ENCODE measurements at regions of chr10 and their contacts with region 1.

Region 1: DNA sequence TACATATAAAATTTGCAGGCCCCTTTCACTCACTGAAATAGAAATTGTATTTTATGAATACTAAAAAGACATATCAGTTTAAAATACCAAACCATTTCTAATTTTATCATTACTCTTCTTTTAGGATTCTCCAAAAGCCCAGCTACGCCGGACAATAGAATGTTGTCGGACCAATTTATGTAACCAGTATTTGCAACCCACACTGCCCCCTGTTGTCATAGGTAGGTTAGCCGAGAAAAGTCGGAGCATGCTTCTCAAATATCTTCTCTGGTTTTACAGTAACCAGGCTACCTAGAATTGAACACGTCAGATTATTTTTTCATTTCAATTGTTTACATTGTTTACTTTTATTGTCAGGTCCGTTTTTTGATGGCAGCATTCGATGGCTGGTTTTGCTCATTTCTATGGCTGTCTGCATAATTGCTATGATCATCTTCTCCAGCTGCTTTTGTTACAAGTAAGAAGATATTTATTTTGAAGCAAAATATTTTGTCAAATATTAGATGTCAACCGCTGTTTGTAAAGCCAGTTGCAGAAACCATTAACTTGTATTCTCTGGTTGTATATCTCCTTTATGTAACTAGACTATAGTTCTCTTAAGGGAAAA is 57.6 kb downstream of the MMRN2 start:
- DNase-seq: peak in 4 of 5 donors; percentile 29 to 35 (median 30)
- H3K4me3 ChIP-seq: no peak overlapping the region
- H3K4me3 Mint-ChIP-seq: no peak overlapping the region
- H3K27ac ChIP-seq: no peak overlapping the region
- H3K27ac Mint-ChIP-seq: no peak overlapping the region
- H3K4me1 ChIP-seq: no peaks in the 10 kb centered on the region
- H3K4me1 Mint-ChIP-seq: peaks cover 0 to 1% (median 0%) of the 10 kb centered on the region in 4 donors
- H3K27me3 ChIP-seq: no peaks in the 10 kb centered on the region
- H3K27me3 Mint-ChIP-seq: no peaks in the 10 kb centered on the region

Region 2: DNA sequence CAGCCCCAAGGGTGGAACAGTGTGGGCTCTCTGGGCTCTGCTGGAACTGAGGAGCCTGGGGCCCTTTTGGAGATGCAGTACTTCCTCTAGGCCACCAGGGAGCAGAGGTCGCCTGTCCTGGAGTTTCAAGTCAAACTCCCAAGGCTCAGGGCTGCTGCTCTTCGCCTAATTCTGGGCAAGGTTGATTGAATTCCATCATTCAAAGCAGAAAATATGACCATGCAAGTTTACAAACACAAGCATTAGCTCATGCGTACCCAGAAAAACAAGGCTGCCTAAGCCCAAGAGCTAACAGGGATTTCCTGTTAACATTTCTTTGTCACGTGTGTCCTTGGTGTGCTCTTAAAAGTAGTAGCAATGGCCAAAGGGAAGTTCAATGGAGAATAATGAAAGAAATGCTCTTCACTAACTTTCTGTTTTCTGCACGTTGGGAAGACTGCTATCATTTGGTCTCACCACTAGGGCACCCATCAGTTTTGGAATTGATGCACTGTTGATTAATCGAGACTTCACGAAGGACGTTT is 211.3 kb before region 1 on chr10:
- CTCF ChIA-PET with region 1: interaction called, 24 read pairs
- POLR2A ChIA-PET with region 1: no interaction called
- intact Hi-C with region 1: loop called (anchors 1 kb)
- DNase-seq: peak; percentile 48 to 55 (median 54)
- H3K4me3 ChIP-seq: no peak overlapping the region
- H3K4me3 Mint-ChIP-seq: peak overlapping the region in 2 of 8 donors; percentile 27 to 48
- H3K27ac ChIP-seq: no peak overlapping the region
- H3K27ac Mint-ChIP-seq: peak overlapping the region in 1 of 7 donors; percentile 6
- H3K4me1 ChIP-seq: no peaks in the 10 kb centered on the region
- H3K4me1 Mint-ChIP-seq: peaks cover 0 to 9% (median 5%) of the 10 kb centered on the region in 4 donors
- H3K27me3 ChIP-seq: no peaks in the 10 kb centered on the region
- H3K27me3 Mint-ChIP-seq: peaks cover 3 to 4% of the 10 kb centered on the region in 2 donors

Region 3: GRCh38 chr10:86693721-86694369 is 205.9 kb before region 1 on chr10:
- CTCF ChIA-PET with region 1: interaction called, 24 read pairs
- POLR2A ChIA-PET with region 1: no interaction called
- intact Hi-C with region 1: loop called (anchors 1 kb)
- DNase-seq: peak; percentile 16 to 25 (median 24)
- H3K4me3 ChIP-seq: no peak overlapping the region
- H3K4me3 Mint-ChIP-seq: no peak overlapping the region
- H3K27ac ChIP-seq: no peak overlapping the region
- H3K27ac Mint-ChIP-seq: peak overlapping the region in 1 of 7 donors; percentile 51
- H3K4me1 ChIP-seq: no peaks in the 10 kb centered on the region
- H3K4me1 Mint-ChIP-seq: peaks cover 0 to 2% (median under 1%) of the 10 kb centered on the region in 4 donors
- H3K27me3 ChIP-seq: no peaks in the 10 kb centered on the region
- H3K27me3 Mint-ChIP-seq: no peaks in the 10 kb centered on the region

Region 4: DNA sequence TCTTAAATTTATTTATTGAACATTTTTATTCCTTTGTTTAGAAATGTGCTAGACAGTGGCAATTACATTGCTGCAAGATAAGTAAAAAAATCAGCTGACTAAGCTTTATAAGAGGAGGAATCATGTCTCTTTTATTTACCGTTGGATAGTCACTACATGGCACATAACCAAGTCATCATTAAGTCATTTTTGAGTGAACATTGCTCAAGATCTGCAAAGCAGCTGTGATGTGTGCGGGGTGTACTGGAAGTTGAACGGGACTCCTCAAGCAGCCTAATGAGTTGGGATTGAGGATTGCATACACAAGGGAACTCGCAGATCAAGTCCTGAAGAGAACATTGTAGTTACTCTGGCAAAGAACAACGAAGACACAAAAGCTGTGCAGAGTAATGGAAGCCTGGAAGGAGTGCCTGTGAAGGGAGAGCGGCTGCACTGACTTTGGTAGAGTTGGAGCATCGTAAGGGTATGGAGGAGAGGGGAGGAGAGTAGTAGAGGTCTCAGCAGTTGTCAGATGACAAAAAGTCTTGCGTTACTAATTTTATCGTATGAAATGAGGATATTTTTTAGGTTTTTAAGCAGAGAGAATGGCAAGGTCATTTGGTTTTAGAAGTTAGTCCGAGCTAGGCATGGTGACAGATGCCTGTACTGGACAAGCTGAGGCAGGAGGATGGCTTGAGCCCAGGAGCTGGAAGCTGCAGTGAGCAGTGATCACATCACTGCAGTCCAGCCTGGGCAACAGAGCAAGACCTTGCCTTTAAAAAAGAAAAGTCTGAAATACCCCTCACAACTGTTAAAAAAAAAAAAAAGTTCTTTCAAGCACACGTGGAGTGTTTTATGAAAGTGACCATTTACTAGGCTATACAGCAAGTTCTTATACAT is 48.2 kb before region 1 on chr10:
- CTCF ChIA-PET with region 1: no interaction called
- POLR2A ChIA-PET with region 1: no interaction called
- intact Hi-C with region 1: no loop called
- DNase-seq: no peak
- H3K4me3 ChIP-seq: no peak overlapping the region
- H3K4me3 Mint-ChIP-seq: no peak overlapping the region
- H3K27ac ChIP-seq: no peak overlapping the region
- H3K27ac Mint-ChIP-seq: no peak overlapping the region
- H3K4me1 ChIP-seq: no peaks in the 10 kb centered on the region
- H3K4me1 Mint-ChIP-seq: no peaks in the 10 kb centered on the region
- H3K27me3 ChIP-seq: no peaks in the 10 kb centered on the region
- H3K27me3 Mint-ChIP-seq: no peaks in the 10 kb centered on the region

Region 5: GRCh38 chr10:86970162-86970981 is 70.6 kb after region 1 on chr10:
- CTCF ChIA-PET with region 1: no interaction called
- POLR2A ChIA-PET with region 1: no interaction called
- intact Hi-C with region 1: no loop called
- DNase-seq: peak in 1 of 5 donors; percentile 13
- H3K4me3 ChIP-seq: peak overlapping the region; percentile 52 to 68
- H3K4me3 Mint-ChIP-seq: peak overlapping the region; percentile 64 to 88 (median 83)
- H3K27ac ChIP-seq: peak overlapping the region; percentile 76
- H3K27ac Mint-ChIP-seq: peak overlapping the region; percentile 90 to 96 (median 92)
- H3K4me1 ChIP-seq: peaks cover 54% of the 10 kb centered on the region
- H3K4me1 Mint-ChIP-seq: peaks cover 27 to 62% (median 40%) of the 10 kb centered on the region in 4 donors
- H3K27me3 ChIP-seq: no peaks in the 10 kb centered on the region
- H3K27me3 Mint-ChIP-seq: peaks cover 0 to 1% of the 10 kb centered on the region in 2 donors